ENCODE measurements at regions of chr2 and their contacts with region 1.

Region 1: GRCh38 chr2:218898109-218898878 is 17.6 kb downstream of the WNT10A start:
- DNase-seq: peak in 34 of 35 experiments; percentile 40 to 85 (median 65)
- ATAC-seq: peak; percentile 25 to 47 (median 44)
- H3K4me3 ChIP-seq: peak overlapping the region in 1 of 2 donors; percentile 57
- H3K4me3 Mint-ChIP-seq: peak overlapping the region; percentile 68 to 86 (median 69)
- H3K27ac ChIP-seq: peak overlapping the region; percentile 98
- H3K27ac Mint-ChIP-seq: peak overlapping the region; percentile 50
- H3K4me1 ChIP-seq: peaks cover 40 to 54% of the 10 kb centered on the region in 2 experiments
- H3K4me1 Mint-ChIP-seq: peaks cover 43 to 46% (median 44%) of the 10 kb centered on the region in 3 donors
- H3K27me3 ChIP-seq: peaks cover 21 to 31% of the 10 kb centered on the region in 2 experiments
- H3K27me3 Mint-ChIP-seq: peaks cover 19 to 21% of the 10 kb centered on the region in 2 donors

Region 2: GRCh38 chr2:218852911-218853667 is 45.2 kb before region 1 on chr2:
- CTCF ChIA-PET with region 1: interaction called, 4 to 13 read pairs
- POLR2A ChIA-PET with region 1: interaction called in 1 of 2 experiments, 9 read pairs
- DNase-seq: peak; percentile 18 to 83 (median 59)
- ATAC-seq: peak; percentile 60 to 90 (median 75)
- H3K4me3 ChIP-seq: no peak overlapping the region
- H3K4me3 Mint-ChIP-seq: no peak overlapping the region
- H3K27ac ChIP-seq: no peak overlapping the region
- H3K27ac Mint-ChIP-seq: no peak overlapping the region
- H3K4me1 ChIP-seq: peaks cover 0 to 6% of the 10 kb centered on the region in 2 experiments
- H3K4me1 Mint-ChIP-seq: peaks cover 0 to 5% (median 0%) of the 10 kb centered on the region in 3 donors
- H3K27me3 ChIP-seq: peaks cover 19 to 85% of the 10 kb centered on the region in 2 experiments
- H3K27me3 Mint-ChIP-seq: peaks cover 60 to 65% of the 10 kb centered on the region in 2 donors

Region 3: GRCh38 chr2:218885981-218886947 is 12.0 kb before region 1 on chr2:
- CTCF ChIA-PET with region 1: interaction called, 192 to 239 read pairs
- POLR2A ChIA-PET with region 1: interaction called, 4 to 10 read pairs
- DNase-seq: no peak
- ATAC-seq: no peak
- H3K4me3 ChIP-seq: no peak overlapping the region
- H3K4me3 Mint-ChIP-seq: no peak overlapping the region
- H3K27ac ChIP-seq: no peak overlapping the region
- H3K27ac Mint-ChIP-seq: peak overlapping the region; percentile 25 to 49
- H3K4me1 ChIP-seq: peaks cover 2 to 29% of the 10 kb centered on the region in 2 experiments
- H3K4me1 Mint-ChIP-seq: peaks cover 32 to 54% (median 47%) of the 10 kb centered on the region in 3 donors
- H3K27me3 ChIP-seq: peaks cover 3 to 21% of the 10 kb centered on the region in 2 experiments
- H3K27me3 Mint-ChIP-seq: no peaks in the 10 kb centered on the region

Region 4: DNA sequence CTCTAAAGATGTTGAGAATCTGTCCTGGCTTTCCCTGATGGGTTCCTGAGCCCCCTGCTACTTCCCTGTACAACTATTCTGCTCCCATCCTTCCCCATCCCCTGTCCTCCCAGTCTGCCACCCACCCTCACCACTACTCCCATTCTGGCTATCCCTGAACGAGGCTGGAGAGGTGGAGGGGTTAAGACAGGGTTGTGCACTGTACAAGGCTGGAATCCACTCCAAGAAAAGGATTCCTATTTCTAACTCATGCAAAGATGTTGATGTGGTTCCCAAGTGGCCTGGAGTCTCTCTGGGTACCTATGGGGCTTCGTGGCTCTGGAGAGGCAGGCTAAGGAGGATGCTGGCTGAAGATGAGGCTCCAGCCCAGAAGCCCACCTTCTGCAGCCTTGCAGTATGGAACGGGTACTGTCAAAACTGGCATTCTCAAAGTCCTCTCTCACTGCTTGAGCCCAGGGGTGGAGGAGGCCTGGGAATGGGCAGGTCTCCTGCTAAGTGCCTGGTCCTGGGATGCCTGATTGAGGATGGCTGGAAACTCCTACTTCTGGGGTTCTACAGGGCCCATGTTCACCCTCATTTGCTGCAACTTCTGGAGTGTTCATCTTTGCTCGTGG is 88.0 kb after region 1 on chr2:
- CTCF ChIA-PET with region 1: no interaction called
- POLR2A ChIA-PET with region 1: no interaction called
- DNase-seq: no peak
- ATAC-seq: no peak
- H3K4me3 ChIP-seq: no peak overlapping the region
- H3K4me3 Mint-ChIP-seq: peak overlapping the region in 1 of 3 donors; percentile 58
- H3K27ac ChIP-seq: no peak overlapping the region
- H3K27ac Mint-ChIP-seq: no peak overlapping the region
- H3K4me1 ChIP-seq: peaks cover 2 to 30% of the 10 kb centered on the region in 2 experiments
- H3K4me1 Mint-ChIP-seq: peaks cover 22 to 26% (median 24%) of the 10 kb centered on the region in 3 donors
- H3K27me3 ChIP-seq: peaks cover 23 to 94% of the 10 kb centered on the region in 2 experiments
- H3K27me3 Mint-ChIP-seq: peaks cover 72 to 88% of the 10 kb centered on the region in 2 donors

Measured in T-cell (primary cell).